ENCODE measurements at regions of chr1 and their contacts with region 1.

Region 1: GRCh38 chr1:65687428-65688214 is 105.1 kb upstream of the PDE4B start:
- DNase-seq: no peak
- H3K4me3 ChIP-seq: no peak overlapping the region
- H3K27ac ChIP-seq: no peak overlapping the region
- H3K4me1 ChIP-seq: peaks cover 15% of the 10 kb centered on the region
- H3K27me3 ChIP-seq: no peaks in the 10 kb centered on the region
- CTCF ChIP-seq: peak; percentile 86 to 97 (median 89)
- POLR2A ChIP-seq: no peak

Region 2: DNA sequence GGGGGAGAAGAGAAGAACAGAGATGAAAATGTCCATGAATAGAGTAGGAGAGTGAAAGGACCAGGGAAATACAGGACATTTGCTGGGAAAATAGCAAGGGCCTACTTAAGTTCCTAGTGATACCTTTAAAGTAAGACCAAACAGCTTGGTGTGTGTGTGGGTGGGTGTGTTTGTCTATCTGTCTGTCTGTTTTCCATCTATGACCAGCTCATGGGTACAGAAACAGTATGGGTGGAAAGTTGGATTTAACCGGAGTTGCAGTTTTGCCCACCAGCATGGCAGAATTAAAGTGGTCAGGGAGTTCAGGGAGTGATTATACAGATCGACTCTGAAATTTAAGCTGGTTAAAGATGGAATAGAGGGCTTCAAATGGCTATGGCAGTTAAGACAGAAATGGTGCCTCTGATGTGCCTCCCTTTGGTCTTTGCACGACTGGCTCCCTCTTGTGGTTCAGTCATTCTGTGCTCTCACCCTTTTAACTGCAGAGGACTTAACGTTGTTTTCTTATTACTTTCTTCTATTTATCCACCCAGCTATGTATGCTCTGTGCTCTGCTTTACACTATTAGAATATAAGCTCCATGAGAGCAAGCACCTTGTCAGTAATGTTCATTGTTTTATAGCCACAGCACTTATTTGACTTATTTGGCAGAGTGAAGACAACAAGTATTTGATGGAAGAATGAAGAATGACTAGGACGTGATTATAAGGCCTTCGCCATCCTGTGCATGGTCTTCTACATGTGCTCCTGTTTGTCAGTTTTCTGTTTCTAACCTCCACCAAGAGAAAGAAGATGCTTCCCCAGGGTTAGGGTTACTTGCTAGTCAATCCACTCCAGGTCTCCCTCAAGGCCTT is 612.3 kb before region 1 on chr1:
- intact Hi-C with region 1: loop called (anchors 10 kb)
- DNase-seq: peak in 1 of 2 donors; percentile 71
- H3K4me3 ChIP-seq: no peak overlapping the region
- H3K27ac ChIP-seq: no peak overlapping the region
- H3K4me1 ChIP-seq: no peaks in the 10 kb centered on the region
- H3K27me3 ChIP-seq: no peaks in the 10 kb centered on the region
- CTCF ChIP-seq: peak in 2 of 3 experiments; percentile 9 to 72
- POLR2A ChIP-seq: no peak

Region 3: DNA sequence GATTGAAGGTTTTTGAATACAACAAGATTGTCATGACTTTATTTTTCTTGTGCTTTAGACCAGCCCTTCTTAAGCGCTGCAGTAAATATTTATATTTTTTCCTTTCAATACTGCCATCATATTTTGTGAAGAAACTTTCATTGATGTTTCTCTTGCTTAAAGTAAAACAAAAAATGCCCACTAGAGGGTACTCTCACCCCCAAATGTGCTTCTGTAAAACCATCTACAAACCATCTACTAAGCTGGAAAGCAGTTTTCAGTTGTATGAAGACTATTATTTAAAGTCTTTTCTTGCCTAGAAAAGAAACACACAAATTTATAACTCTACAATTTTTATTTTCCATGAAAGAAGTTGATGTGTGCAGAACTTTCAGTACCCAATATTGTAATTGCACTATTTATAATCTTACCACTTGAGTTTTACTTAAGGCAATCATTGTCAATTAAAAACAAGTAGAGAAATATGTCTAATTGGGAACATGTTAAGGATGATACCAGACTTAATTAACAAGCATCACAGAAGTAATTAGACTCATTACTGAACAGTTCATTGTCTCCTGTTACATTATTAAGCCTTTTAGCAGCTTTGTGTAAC is 256.4 kb before region 1 on chr1:
- intact Hi-C with region 1: loop called (anchors 10 kb)
- DNase-seq: no peak
- H3K4me3 ChIP-seq: no peak overlapping the region
- H3K27ac ChIP-seq: no peak overlapping the region
- H3K4me1 ChIP-seq: peaks cover 12% of the 10 kb centered on the region
- H3K27me3 ChIP-seq: no peaks in the 10 kb centered on the region
- CTCF ChIP-seq: peak in 1 of 3 experiments; percentile 51
- POLR2A ChIP-seq: no peak